T-cell (primary cell): ENCODE measurements at regions of chrX and their contacts with region 1.

Region 1: GRCh38 chrX:119647552-119648420 is 41.6 kb upstream of the NKRF start:
- DNase-seq: peak in 33 of 35 experiments; percentile 5 to 75 (median 45)
- ATAC-seq: peak; percentile 55 to 86 (median 68)
- H3K4me3 ChIP-seq: no peak overlapping the region
- H3K4me3 Mint-ChIP-seq: peak overlapping the region in 2 of 3 donors; percentile 29 to 34
- H3K27ac ChIP-seq: peak overlapping the region; percentile 57
- H3K27ac Mint-ChIP-seq: peak overlapping the region; percentile 80 to 86
- H3K4me1 ChIP-seq: peaks cover 0 to 29% of the 10 kb centered on the region in 2 experiments
- H3K4me1 Mint-ChIP-seq: peaks cover 27 to 44% (median 36%) of the 10 kb centered on the region in 3 donors
- H3K27me3 ChIP-seq: no peaks in the 10 kb centered on the region
- H3K27me3 Mint-ChIP-seq: no peaks in the 10 kb centered on the region

Region 2: DNA sequence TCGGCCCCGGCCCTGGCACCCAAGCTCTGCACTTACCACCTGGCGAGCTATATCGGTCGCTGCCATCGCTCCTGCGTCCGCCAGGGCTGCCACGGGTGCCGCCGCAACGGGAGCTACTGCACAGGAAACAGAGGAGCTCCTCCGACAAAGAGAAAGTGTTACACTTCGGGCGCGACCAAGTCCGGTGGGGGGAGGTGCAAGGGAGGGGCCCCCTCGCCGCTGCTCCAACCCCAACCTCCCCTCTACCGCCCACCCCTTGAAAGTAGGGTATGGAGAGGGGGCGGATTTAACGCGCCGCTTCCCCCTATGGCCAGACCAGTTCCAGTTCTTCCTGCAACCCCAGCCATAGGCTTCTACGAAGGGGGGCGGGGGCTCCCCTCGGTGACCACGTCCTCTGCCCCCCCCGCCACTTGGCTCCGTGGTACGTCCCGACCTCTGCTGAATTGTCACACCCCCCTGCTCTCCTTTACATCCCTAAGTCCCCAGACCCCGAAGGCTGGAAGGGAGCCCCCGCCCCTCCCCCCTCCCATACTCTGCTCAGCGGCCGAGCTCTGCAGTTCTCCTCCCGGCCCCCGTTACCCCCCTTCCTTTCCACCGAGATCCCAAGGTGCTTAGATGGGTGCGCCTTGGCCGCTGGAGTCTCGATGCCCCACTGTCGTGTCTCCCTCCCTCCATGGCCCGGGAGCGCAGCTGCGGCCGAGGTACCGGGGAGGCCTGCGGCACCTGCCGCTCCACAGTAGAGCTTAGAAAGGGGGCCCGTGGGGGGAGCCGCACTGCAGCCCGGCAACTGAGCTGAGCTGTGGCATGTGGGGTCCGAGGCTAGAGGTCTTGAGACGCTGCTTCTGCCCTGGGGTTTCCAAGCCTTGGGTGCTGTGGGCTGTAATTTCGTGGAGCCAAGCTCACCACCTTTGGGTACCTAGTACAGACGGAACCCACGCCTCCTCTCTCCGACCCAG is 45.5 kb after region 1 on chrX and contains the start of gene SEPTIN6:
- CTCF ChIA-PET with region 1: interaction called, 3 to 4 read pairs
- POLR2A ChIA-PET with region 1: interaction called, 7 to 12 read pairs
- DNase-seq: peak; percentile 74 to 91 (median 83)
- ATAC-seq: peak; percentile 71 to 75 (median 74)
- H3K4me3 ChIP-seq: peak within 1 kb of the TSS; percentile 84 to 95
- H3K4me3 Mint-ChIP-seq: peak within 1 kb of the TSS; percentile 93 to 96 (median 94)
- H3K27ac ChIP-seq: peak within 1 kb of the TSS; percentile 68
- H3K27ac Mint-ChIP-seq: peak within 1 kb of the TSS; percentile 94 to 98
- H3K4me1 ChIP-seq: peaks cover 16 to 30% of the 10 kb centered on the region in 2 experiments
- H3K4me1 Mint-ChIP-seq: peaks cover 31 to 48% (median 33%) of the 10 kb centered on the region in 3 donors
- H3K27me3 ChIP-seq: no peaks in the 10 kb centered on the region
- H3K27me3 Mint-ChIP-seq: no peaks in the 10 kb centered on the region
- total RNA-seq, gene SEPTIN6: 171 to 269 (median 206) TPM

Region 3: DNA sequence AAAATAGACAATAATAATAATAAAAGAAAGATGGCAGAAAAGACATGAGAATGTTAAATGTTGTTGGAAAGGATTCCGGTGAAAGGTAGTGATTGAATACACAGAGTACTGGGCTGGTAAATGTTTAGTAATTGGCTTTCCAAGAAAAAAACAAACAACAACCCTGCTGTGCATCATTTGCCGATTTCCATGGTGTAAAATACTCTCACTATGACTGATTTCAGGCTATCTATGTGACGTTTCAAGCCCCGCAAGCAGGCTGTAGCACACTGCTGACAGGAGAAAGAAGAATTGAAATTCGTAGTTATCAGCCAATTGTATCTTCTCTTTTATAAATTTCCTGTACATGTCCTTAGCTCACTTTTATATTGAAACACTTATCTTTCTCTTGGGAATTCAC is 58.8 kb after region 1 on chrX:
- CTCF ChIA-PET with region 1: no interaction called
- POLR2A ChIA-PET with region 1: no interaction called
- DNase-seq: no peak
- ATAC-seq: no peak
- H3K4me3 ChIP-seq: no peak overlapping the region
- H3K4me3 Mint-ChIP-seq: no peak overlapping the region
- H3K27ac ChIP-seq: no peak overlapping the region
- H3K27ac Mint-ChIP-seq: no peak overlapping the region
- H3K4me1 ChIP-seq: no peaks in the 10 kb centered on the region
- H3K4me1 Mint-ChIP-seq: peaks cover 0 to 14% (median 2%) of the 10 kb centered on the region in 3 donors
- H3K27me3 ChIP-seq: no peaks in the 10 kb centered on the region
- H3K27me3 Mint-ChIP-seq: peaks cover 0 to 6% of the 10 kb centered on the region in 2 donors